Dorsolateral prefrontal cortex (tissue), 120 donors: ENCODE measurements at regions of chr1 and their contacts with region 1.

Region 1: DNA sequence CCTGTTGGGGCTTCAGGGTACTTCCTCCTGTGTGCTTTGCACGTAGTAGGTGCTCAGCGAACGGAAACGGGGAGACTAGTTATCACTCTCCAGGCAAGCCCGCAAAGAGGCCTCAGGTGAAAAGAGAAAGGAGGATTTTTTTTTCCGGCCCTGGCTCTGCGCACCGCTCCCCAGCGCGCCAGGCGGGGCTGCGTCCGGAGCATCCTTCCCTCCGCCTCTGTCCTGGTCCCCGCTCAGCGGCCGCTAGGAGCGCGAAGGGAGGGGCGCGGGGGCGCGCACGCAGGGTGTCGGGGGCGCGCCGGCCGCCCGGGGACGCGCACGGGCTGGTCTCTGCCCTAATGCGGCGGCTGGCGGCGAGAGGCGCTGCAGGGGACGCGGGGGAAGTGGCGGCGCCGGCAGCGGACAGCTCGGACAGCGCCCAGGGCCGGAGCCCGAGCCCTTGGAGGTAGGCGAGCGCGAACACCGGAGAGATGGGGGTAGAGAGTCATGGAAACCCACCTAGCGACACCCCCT is 42.3 kb upstream of the NFASC start:
- DNase-seq: peak; percentile 76 to 93 (median 85)
- H3K4me3 ChIP-seq: peak overlapping the region; percentile 50 to 84 (median 74)
- H3K27ac ChIP-seq: peak overlapping the region in 58 of 59 donors; percentile 67 to 96 (median 92)
- H3K27me3 ChIP-seq: no peaks in the 10 kb centered on the region
- CTCF ChIP-seq: peak in 55 of 56 donors; percentile 22 to 75 (median 54)

Region 2: GRCh38 chr1:204647114-204647804 is 181.1 kb before region 1 on chr1:
- intact Hi-C with region 1: no loop called
- DNase-seq: peak in 1 of 10 donors; percentile 31
- H3K4me3 ChIP-seq: no peak overlapping the region
- H3K27ac ChIP-seq: no peak overlapping the region
- H3K27me3 ChIP-seq: no peaks in the 10 kb centered on the region
- CTCF ChIP-seq: no peak

Region 3: GRCh38 chr1:204846546-204847167 is 18.3 kb after region 1 on chr1:
- intact Hi-C with region 1: loop called in 1 of 2 experiments (anchors 1 kb)
- DNase-seq: peak; percentile 34 to 96 (median 87)
- H3K4me3 ChIP-seq: peak overlapping the region in 3 of 59 donors; percentile 7 to 8 (median 7)
- H3K27ac ChIP-seq: peak overlapping the region; percentile 38 to 97 (median 88)
- H3K27me3 ChIP-seq: no peaks in the 10 kb centered on the region
- CTCF ChIP-seq: peak in 5 of 56 donors; percentile 15 to 42 (median 19)